ENCODE measurements at regions of chr10 and their contacts with region 1.

Region 1: GRCh38 chr10:101060036-101060950 is 1.5 kb upstream of the KAZALD1 start:
- DNase-seq: peak; percentile 93
- ATAC-seq: peak; percentile 75
- H3K4me3 Mint-ChIP-seq: peak overlapping the region; percentile 88
- H3K27ac Mint-ChIP-seq: peak overlapping the region; percentile 96
- H3K4me1 Mint-ChIP-seq: peaks cover 47% of the 10 kb centered on the region
- H3K27me3 Mint-ChIP-seq: peaks cover 23% of the 10 kb centered on the region

Region 2: DNA sequence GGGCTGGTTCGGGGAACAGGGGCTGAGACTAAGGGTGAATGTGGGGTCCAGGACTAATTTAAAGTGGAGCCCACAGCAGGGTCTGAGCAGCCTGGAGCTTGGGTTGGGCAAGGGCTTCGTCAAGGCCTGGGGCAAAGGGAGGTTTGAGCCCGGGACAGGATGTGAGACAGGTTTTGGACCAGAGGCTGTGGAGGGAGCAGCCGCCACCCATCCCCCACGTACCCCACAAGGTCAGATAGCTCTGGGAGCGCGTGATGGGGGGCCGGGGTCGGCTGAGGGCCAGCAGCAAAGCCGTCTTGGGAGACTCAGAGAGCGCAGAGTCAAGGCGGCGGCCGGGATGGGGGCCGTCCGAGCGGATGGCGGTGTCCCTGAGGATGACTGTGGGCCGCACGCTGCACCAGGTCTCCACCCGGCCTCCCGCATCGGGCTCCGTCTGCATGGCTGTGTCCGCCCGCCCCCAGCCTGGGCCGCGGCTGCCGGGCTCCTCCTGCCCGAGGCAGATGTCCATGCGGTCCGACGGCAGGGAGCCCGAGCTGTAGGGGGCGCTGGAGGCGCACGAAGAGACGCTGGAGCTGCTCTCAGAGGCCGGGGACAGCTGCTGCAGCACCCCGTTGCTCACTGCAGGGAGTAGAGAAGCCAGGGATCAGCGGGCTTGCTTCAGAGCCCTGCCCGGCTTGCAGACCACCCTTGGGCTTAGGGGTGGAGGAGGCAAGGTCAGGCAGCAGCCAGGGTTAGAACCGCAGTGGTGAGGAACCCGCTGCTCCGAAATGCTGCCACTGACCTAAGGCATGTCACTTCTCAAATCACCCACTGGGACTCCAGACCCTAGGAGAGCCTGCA is 41.5 kb before region 1 on chr10:
- CTCF ChIA-PET with region 1: interaction called, 18 read pairs
- POLR2A ChIA-PET with region 1: no interaction called
- DNase-seq: peak; percentile 83
- ATAC-seq: peak; percentile 90
- H3K4me3 Mint-ChIP-seq: no peak overlapping the region
- H3K27ac Mint-ChIP-seq: no peak overlapping the region
- H3K4me1 Mint-ChIP-seq: peaks cover 10% of the 10 kb centered on the region
- H3K27me3 Mint-ChIP-seq: peaks cover 43% of the 10 kb centered on the region

Region 3: DNA sequence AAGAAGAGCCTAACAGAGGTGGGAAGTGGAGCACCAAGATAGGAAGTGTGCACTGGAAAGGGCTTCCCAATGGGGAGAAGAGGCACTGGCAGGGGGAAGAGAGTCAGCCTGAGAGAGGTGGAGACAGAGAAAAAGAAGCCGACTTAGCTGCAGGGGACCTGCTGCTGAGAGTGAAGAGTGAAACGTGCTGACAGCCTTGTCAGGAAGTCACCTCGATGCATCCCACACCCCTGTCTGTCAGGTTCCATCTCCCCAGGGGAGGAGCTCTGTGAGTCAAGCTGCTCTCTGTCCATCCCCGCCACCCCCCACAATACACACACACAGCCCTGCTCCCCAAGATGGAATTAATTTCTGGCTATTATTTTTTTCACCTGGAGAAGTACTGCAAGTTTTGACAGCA is 15.5 kb after region 1 on chr10:
- CTCF ChIA-PET with region 1: interaction called, 56 read pairs
- POLR2A ChIA-PET with region 1: interaction called, 3 read pairs
- DNase-seq: no peak
- ATAC-seq: peak; percentile 47
- H3K4me3 Mint-ChIP-seq: no peak overlapping the region
- H3K27ac Mint-ChIP-seq: no peak overlapping the region
- H3K4me1 Mint-ChIP-seq: no peaks in the 10 kb centered on the region
- H3K27me3 Mint-ChIP-seq: peaks cover 55% of the 10 kb centered on the region

Region 4: GRCh38 chr10:101095542-101096213 is 35.4 kb after region 1 on chr10:
- CTCF ChIA-PET with region 1: interaction called, 12 read pairs
- POLR2A ChIA-PET with region 1: interaction called, 3 read pairs
- DNase-seq: peak; percentile 79
- ATAC-seq: peak; percentile 90
- H3K4me3 Mint-ChIP-seq: no peak overlapping the region
- H3K27ac Mint-ChIP-seq: no peak overlapping the region
- H3K4me1 Mint-ChIP-seq: no peaks in the 10 kb centered on the region
- H3K27me3 Mint-ChIP-seq: peaks cover 34% of the 10 kb centered on the region

Region 5: DNA sequence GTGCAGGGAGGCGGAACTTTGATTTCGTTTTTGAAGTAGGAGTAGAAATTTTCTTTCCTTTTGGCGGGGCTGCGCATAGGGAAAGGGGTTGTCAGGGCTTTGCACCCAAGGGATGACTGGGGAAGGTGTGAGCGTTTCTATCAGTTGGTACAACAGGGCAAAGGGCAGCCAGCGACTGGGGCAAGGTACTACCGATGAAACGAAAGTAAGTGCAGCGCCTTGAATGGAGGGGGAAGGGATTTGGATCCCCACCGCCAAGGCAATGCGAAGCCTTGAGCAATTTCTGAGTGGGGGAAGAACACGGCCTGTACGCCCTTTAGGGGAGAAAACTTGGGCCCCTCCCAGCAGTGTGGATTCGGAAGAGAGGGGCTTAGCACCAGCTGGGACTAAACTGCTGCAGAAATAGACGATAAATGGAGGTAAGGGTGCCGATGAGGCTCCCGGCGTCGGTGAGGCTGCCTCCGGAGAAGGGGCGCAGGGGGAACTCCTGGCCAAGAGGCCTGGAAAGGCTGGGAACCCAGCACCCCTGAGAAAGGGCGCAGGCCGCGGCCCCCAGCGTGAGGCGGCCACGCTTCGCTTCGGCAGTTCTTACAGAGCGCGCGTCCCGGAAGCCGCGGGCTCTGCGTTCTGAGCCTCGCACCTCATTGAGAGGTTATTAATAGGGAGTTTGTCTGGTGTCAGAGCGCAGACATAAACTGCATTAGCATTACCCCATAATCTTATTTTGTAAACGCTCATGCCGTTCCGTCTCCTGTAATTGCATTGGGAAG is 60.8 kb after region 1 on chr10:
- CTCF ChIA-PET with region 1: interaction called, 10 read pairs
- POLR2A ChIA-PET with region 1: no interaction called
- DNase-seq: peak; percentile 51
- ATAC-seq: peak; percentile 80
- H3K4me3 Mint-ChIP-seq: peak overlapping the region; percentile 80
- H3K27ac Mint-ChIP-seq: peak overlapping the region; percentile 78
- H3K4me1 Mint-ChIP-seq: peaks cover 27% of the 10 kb centered on the region
- H3K27me3 Mint-ChIP-seq: peaks cover 61% of the 10 kb centered on the region

Region 6: DNA sequence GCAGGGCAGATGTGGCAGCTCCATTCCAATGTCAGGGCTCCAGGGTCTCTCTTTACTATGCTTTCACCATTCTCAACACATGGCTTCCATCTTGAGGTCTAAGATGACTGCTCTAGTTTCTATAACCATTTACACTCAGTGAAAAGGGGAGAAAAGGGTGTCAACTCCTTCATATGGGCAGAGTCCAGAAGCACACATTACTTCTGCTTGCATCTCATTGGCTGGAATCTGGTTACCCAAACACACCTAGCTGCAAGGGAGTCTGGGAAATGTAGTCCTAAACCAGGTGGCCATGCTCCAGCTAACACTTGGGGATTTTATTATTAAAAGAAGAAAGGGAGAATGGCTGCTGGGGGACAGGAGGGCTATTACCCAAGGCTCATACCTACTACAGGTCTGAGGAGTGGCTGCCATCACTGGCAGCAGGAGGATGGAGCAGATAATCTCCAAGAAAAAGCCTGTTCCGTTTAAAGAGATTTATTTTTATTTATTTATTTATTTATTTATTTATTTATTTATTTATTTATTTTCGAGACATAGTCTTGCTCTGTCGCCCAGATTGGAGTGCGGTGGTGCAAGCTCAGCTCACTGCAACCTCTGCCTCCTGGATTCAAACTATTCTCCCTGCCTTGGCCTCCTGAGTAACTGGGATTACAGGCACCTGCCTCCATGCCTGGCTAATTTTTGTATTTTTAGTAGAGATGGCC is 198.0 kb after region 1 on chr10:
- CTCF ChIA-PET with region 1: no interaction called
- POLR2A ChIA-PET with region 1: no interaction called
- DNase-seq: no peak
- ATAC-seq: no peak
- H3K4me3 Mint-ChIP-seq: no peak overlapping the region
- H3K27ac Mint-ChIP-seq: no peak overlapping the region
- H3K4me1 Mint-ChIP-seq: no peaks in the 10 kb centered on the region
- H3K27me3 Mint-ChIP-seq: peaks cover 23% of the 10 kb centered on the region

Measured in activated CD8-positive, alpha-beta T cell treated with anti-CD3 and anti-CD28 coated beads, Interleukin-2, amount 10 ng/mL, durations not matched to agents 7 days and 5 days (primary cell).